Motor neuron (in vitro differentiated cells): ENCODE measurements at regions of chr3 and their contacts with region 1.

Region 1: GRCh38 chr3:160565442-160566403 is at the start of gene KPNA4:
- ATAC-seq: peak; percentile 78 to 95 (median 94)
- H3K4me3 ChIP-seq: peak within 1 kb of the TSS; percentile 80 to 91 (median 89)
- H3K27ac ChIP-seq: peak within 1 kb of the TSS; percentile 92
- H3K4me1 ChIP-seq: peaks cover 3 to 8% of the 10 kb centered on the region in 2 donors
- total RNA-seq, gene KPNA4: 18.4 to 40.8 (median 27.3) TPM

Region 2: DNA sequence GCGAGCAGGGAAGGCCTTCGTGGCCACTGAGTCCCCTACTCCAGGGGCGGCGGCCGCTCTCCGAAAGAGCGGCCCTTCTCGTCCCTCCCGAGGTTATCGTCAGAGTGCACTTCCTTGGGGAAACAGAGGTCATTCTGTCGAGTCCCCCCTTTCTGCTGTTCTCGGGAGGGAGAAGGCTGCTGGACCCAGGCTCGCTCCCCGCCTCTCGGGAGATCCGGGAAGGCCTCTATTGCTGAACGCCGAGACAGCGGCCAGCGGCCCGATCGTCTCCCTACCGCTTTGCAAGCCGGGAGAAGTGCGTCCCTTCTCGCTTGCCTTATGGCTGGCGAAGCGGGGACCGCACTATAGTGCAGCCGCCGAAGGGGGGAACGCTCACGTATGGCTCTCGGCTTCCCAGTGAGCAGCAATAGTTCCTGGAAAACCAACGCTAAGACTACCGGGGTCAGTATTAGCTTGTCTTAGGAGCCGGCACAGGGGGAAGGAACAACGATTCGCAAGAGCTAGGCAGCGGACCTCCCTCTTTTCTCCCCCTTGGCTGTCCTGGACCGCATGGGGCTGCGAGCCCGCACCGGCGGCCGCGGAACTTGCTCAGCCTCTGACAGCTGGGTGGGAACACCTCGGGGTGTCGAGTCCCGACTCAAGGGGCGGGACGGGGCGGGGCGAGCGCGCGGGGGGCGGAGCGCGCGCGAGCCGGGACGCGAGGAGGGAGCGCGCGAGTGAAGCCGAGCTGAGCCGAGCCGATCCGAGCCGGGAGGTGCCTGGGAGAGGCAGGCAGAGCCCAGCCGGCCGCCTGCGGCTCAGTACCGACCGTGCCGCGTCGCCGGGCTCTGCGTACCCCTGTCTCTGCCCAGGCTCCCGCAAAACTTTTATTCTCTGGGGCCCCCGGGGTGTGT is 189.4 kb after region 1 on chr3:
- in situ Hi-C with region 1: loop called in 1 of 9 experiments (anchors 25 kb)
- ATAC-seq: peak; percentile 77 to 86 (median 83)
- H3K4me3 ChIP-seq: peak overlapping the region; percentile 57 to 75 (median 63)
- H3K27ac ChIP-seq: peak overlapping the region; percentile 92 to 95
- H3K4me1 ChIP-seq: peaks cover 8 to 24% of the 10 kb centered on the region in 2 donors